B cell (primary cell): ENCODE measurements at regions of chr1 and their contacts with region 1.

Region 1: DNA sequence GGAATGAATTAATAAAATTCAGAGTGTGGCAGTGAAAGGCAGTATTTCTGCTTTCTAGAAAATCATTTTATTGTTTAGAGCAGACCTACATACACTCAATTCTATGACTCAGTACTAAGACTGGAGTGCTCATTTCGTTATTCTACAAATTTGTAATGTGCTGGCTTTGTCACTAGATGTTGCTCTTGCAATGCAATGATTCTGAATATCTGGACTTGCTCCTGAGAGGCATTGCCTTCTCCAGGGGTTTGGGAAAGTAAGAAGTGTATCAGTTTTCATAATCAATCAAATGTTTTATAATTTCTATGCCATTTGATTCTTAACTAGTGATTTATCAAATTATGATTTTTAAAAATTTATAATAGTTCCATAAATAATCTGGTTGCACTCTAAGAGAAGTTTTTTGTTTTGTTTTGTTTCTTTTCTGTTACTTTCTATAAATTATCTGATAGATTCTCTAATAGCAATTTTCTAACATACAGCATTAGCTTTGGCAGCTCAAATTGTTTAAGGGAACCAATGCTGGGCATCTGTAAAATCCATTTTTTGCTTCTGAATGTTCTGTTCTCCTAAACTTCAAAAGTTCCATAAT is 280.5 kb upstream of the SGIP1 start:
- DNase-seq: peak; percentile 73
- ATAC-seq: peak; percentile 73
- H3K4me3 ChIP-seq: no peak overlapping the region
- H3K4me3 Mint-ChIP-seq: no peak overlapping the region
- H3K27ac ChIP-seq: no peak overlapping the region
- H3K27ac Mint-ChIP-seq: no peak overlapping the region
- H3K4me1 ChIP-seq: peaks cover 7 to 13% of the 10 kb centered on the region in 2 donors
- H3K4me1 Mint-ChIP-seq: peaks cover 22% of the 10 kb centered on the region
- H3K27me3 ChIP-seq: no peaks in the 10 kb centered on the region
- H3K27me3 Mint-ChIP-seq: no peaks in the 10 kb centered on the region
- CTCF ChIP-seq: peak; percentile 83

Region 2: GRCh38 chr1:66176012-66176715 is 77.3 kb before region 1 on chr1:
- CTCF ChIA-PET with region 1: no interaction called
- POLR2A ChIA-PET with region 1: no interaction called
- intact Hi-C with region 1: no loop called
- DNase-seq: no peak
- ATAC-seq: no peak
- H3K4me3 ChIP-seq: no peak overlapping the region
- H3K4me3 Mint-ChIP-seq: no peak overlapping the region
- H3K27ac ChIP-seq: no peak overlapping the region
- H3K27ac Mint-ChIP-seq: no peak overlapping the region
- H3K4me1 ChIP-seq: no peaks in the 10 kb centered on the region
- H3K4me1 Mint-ChIP-seq: no peaks in the 10 kb centered on the region
- H3K27me3 ChIP-seq: no peaks in the 10 kb centered on the region
- H3K27me3 Mint-ChIP-seq: peaks cover 7% of the 10 kb centered on the region
- CTCF ChIP-seq: no peak

Region 3: DNA sequence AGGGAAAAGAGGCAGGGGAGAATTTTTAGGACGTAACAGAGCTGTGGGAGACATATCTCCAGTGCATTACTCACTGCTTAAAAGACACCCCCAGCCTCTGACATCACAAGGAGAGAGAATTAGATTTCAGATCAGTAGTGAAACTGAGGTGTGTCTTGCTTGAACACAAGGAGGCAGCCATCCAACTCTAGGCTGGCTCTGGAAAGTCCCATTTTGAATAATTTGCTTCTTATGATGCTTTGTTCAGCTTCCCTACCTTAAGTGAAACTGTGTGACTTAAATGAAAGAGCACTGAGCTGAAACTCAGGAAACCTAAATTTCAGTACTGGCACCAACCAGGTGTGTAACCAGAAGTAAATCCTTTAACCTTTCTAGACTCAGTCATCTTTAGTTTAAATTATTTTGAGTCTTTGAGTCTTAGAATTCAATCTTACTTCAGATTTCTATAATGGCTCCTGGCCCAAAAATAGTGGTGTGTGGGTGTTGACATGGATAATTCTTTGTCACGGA is 29.0 kb after region 1 on chr1:
- CTCF ChIA-PET with region 1: interaction called, 11 read pairs
- POLR2A ChIA-PET with region 1: no interaction called
- intact Hi-C with region 1: loop called (anchors 1 kb)
- DNase-seq: peak; percentile 94
- ATAC-seq: peak; percentile 91
- H3K4me3 ChIP-seq: peak overlapping the region in 2 of 5 experiments; percentile 10 to 39
- H3K4me3 Mint-ChIP-seq: peak overlapping the region; percentile 80
- H3K27ac ChIP-seq: peak overlapping the region; percentile 86 to 88
- H3K27ac Mint-ChIP-seq: peak overlapping the region; percentile 92
- H3K4me1 ChIP-seq: peaks cover 62 to 67% of the 10 kb centered on the region in 2 donors
- H3K4me1 Mint-ChIP-seq: peaks cover 79% of the 10 kb centered on the region
- H3K27me3 ChIP-seq: no peaks in the 10 kb centered on the region
- H3K27me3 Mint-ChIP-seq: no peaks in the 10 kb centered on the region
- CTCF ChIP-seq: peak; percentile 44

Region 4: GRCh38 chr1:66350001-66350547 is 96.6 kb after region 1 on chr1:
- CTCF ChIA-PET with region 1: interaction called, 14 read pairs
- POLR2A ChIA-PET with region 1: interaction called, 3 read pairs
- intact Hi-C with region 1: loop called (anchors 1 kb)
- DNase-seq: peak; percentile 82
- ATAC-seq: peak; percentile 78
- H3K4me3 ChIP-seq: peak overlapping the region in 2 of 5 experiments; percentile 4 to 31
- H3K4me3 Mint-ChIP-seq: peak overlapping the region; percentile 88
- H3K27ac ChIP-seq: peak overlapping the region; percentile 74 to 87
- H3K27ac Mint-ChIP-seq: peak overlapping the region; percentile 84
- H3K4me1 ChIP-seq: peaks cover 74 to 94% of the 10 kb centered on the region in 2 donors
- H3K4me1 Mint-ChIP-seq: peaks cover 95% of the 10 kb centered on the region
- H3K27me3 ChIP-seq: no peaks in the 10 kb centered on the region
- H3K27me3 Mint-ChIP-seq: no peaks in the 10 kb centered on the region
- CTCF ChIP-seq: no peak

Region 5: DNA sequence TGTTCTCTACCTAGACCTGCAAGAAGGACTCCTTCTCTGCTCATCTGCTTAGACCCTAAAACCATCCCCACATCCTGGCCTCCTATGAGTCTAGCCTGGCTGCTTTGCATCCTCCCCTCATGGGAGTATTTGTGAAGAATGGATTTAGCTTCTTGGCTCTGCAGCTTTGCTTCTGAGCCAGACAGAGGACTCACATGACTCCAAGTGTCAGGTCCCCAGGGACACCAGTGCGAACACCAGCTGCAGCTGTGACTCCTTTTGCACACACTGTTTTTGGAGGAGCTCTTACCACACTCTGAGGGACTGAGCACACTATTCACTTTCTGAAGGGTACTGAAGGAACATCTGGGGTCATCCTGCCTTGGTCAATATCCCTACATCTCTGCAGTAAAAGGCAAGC is 148.8 kb after region 1 on chr1:
- CTCF ChIA-PET with region 1: interaction called, 23 read pairs
- POLR2A ChIA-PET with region 1: no interaction called
- intact Hi-C with region 1: no loop called
- DNase-seq: peak; percentile 92
- ATAC-seq: peak; percentile 87
- H3K4me3 ChIP-seq: no peak overlapping the region
- H3K4me3 Mint-ChIP-seq: peak overlapping the region; percentile 77
- H3K27ac ChIP-seq: peak overlapping the region; percentile 37 to 76
- H3K27ac Mint-ChIP-seq: peak overlapping the region; percentile 88
- H3K4me1 ChIP-seq: peaks cover 42 to 45% of the 10 kb centered on the region in 2 donors
- H3K4me1 Mint-ChIP-seq: peaks cover 67% of the 10 kb centered on the region
- H3K27me3 ChIP-seq: no peaks in the 10 kb centered on the region
- H3K27me3 Mint-ChIP-seq: no peaks in the 10 kb centered on the region
- CTCF ChIP-seq: no peak

Region 6: GRCh38 chr1:66503841-66504470 is 250.5 kb after region 1 on chr1:
- CTCF ChIA-PET with region 1: interaction called, 5 read pairs
- POLR2A ChIA-PET with region 1: no interaction called
- intact Hi-C with region 1: loop called (anchors 5 kb)
- DNase-seq: peak; percentile 49
- ATAC-seq: no peak
- H3K4me3 ChIP-seq: no peak overlapping the region
- H3K4me3 Mint-ChIP-seq: no peak overlapping the region
- H3K27ac ChIP-seq: no peak overlapping the region
- H3K27ac Mint-ChIP-seq: no peak overlapping the region
- H3K4me1 ChIP-seq: no peaks in the 10 kb centered on the region
- H3K4me1 Mint-ChIP-seq: no peaks in the 10 kb centered on the region
- H3K27me3 ChIP-seq: no peaks in the 10 kb centered on the region
- H3K27me3 Mint-ChIP-seq: peaks cover 20% of the 10 kb centered on the region
- CTCF ChIP-seq: peak; percentile 72